ENCODE measurements at regions of chr5 and their contacts with region 1.

Region 1: DNA sequence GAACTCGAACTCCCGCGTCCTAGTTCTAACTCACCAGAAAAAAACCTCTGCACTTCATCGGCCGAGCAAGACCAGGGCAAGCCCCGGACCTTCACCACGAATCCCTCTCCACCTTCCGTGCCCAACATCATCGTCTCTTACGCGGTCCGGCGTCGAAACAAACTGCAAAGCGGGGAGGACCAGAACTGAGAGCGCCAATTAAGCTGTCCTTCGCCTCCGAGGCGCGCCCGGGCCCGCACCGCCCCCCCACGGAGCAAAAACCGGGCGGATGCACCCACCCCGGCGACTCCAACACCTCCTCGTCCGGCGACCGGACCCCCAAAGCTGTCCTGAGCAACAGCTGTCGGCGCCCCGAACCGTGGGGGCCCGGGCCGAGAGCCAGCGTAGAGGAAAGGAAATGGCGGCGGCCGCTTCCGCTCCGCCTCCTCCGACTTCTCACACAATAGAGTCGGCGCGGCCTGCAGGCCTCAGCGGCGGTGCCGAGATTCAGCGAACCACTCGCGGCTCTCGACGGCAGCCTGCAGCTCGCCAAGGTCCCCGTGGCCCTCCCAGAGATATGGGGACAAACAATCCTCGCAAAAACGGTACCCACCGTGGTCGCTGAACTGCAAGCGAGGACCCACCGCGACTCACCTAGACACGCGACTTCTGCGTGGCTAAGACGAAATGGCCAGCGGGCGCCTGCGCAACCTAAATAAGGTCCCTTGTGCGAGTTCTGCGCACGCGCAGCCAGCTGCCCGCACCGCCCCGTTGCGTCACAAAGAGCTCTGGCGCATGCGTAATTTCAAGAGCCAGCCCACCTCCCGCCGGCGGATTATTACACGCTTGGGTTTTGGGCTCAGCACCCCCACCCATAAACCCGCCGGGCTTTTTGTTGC is at the start of gene HNRNPH1:
- DNase-seq: peak; percentile 95 to 99 (median 99)
- ATAC-seq: peak; percentile 85
- H3K4me3 ChIP-seq: peak within 1 kb of the TSS; percentile 97
- H3K4me3 Mint-ChIP-seq: peak within 1 kb of the TSS; percentile 82 to 99 (median 98)
- H3K27ac ChIP-seq: peak within 1 kb of the TSS; percentile 98
- H3K27ac Mint-ChIP-seq: peak within 1 kb of the TSS; percentile 99 to 100 (median 99)
- H3K4me1 ChIP-seq: peaks cover 45 to 47% of the 10 kb centered on the region in 2 donors
- H3K4me1 Mint-ChIP-seq: peaks cover 35 to 56% (median 44%) of the 10 kb centered on the region in 7 donors
- H3K27me3 ChIP-seq: no peaks in the 10 kb centered on the region
- H3K27me3 Mint-ChIP-seq: peaks cover 0 to 8% (median 0%) of the 10 kb centered on the region in 5 donors
- total RNA-seq, gene HNRNPH1: 1,010 to 2,239 (median 1,692) TPM

Region 2: GRCh38 chr5:178204182-178204894 is 1418.9 kb before region 1 on chr5 and contains the start of gene HNRNPAB:
- CTCF ChIA-PET with region 1: no interaction called
- POLR2A ChIA-PET with region 1: interaction called, 3 read pairs
- intact Hi-C with region 1: loop called in 1 of 2 experiments (anchors 2 kb)
- DNase-seq: peak; percentile 93 to 98 (median 95)
- ATAC-seq: peak; percentile 92
- H3K4me3 ChIP-seq: peak within 1 kb of the TSS; percentile 94
- H3K4me3 Mint-ChIP-seq: peak within 1 kb of the TSS; percentile 90 to 100 (median 99)
- H3K27ac ChIP-seq: peak within 1 kb of the TSS; percentile 88
- H3K27ac Mint-ChIP-seq: peak within 1 kb of the TSS; percentile 91 to 100 (median 99)
- H3K4me1 ChIP-seq: peaks cover 11 to 25% of the 10 kb centered on the region in 2 donors
- H3K4me1 Mint-ChIP-seq: peaks cover 26 to 35% (median 33%) of the 10 kb centered on the region in 7 donors
- H3K27me3 ChIP-seq: no peaks in the 10 kb centered on the region
- H3K27me3 Mint-ChIP-seq: peaks cover 0 to 2% (median 0%) of the 10 kb centered on the region in 5 donors
- total RNA-seq, gene HNRNPAB: 68.9 to 197 (median 82.6) TPM

Region 3: DNA sequence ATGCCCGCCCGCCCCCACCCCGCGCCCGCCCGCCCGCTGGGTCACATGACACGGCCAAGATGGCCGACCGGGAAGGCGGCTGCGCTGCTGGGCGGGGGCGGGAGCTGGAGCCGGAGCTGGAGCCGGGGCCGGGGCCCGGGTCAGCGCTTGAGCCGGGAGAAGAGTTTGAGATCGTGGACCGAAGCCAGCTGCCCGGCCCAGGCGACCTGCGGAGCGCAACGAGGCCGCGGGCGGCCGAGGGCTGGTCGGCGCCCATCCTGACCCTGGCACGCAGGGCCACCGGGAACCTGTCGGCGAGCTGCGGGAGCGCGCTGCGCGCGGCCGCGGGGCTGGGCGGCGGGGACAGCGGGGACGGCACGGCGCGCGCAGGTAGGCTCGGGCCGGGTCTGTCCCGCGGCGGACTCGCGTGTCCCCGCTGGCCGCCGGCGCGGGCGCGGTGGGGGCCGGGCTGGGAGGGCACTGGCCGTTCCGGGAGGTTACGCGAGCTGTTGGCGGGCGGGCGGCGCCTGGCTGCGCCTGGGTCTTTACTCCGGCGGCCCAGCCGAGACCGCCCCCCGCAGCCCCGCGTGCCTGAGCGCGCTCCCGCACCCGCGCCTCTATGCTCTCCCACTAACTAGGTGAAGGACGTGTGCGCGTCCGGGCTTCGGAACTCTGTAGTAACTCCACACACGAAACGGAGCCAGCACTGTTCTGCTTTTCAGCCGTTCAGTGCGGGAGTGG is 72.6 kb before region 1 on chr5 and contains the start of gene RUFY1:
- CTCF ChIA-PET with region 1: no interaction called
- POLR2A ChIA-PET with region 1: interaction called, 64 read pairs
- intact Hi-C with region 1: loop called (anchors 1 kb)
- DNase-seq: peak; percentile 74 to 92 (median 87)
- ATAC-seq: peak; percentile 90
- H3K4me3 ChIP-seq: peak within 1 kb of the TSS; percentile 84
- H3K4me3 Mint-ChIP-seq: peak within 1 kb of the TSS; percentile 94 to 99 (median 96)
- H3K27ac ChIP-seq: peak within 1 kb of the TSS; percentile 87
- H3K27ac Mint-ChIP-seq: peak within 1 kb of the TSS; percentile 91 to 99 (median 98)
- H3K4me1 ChIP-seq: peaks cover 12 to 15% of the 10 kb centered on the region in 2 donors
- H3K4me1 Mint-ChIP-seq: peaks cover 10 to 49% (median 35%) of the 10 kb centered on the region in 7 donors
- H3K27me3 ChIP-seq: no peaks in the 10 kb centered on the region
- H3K27me3 Mint-ChIP-seq: peaks cover 0 to 4% (median 0%) of the 10 kb centered on the region in 5 donors
- total RNA-seq, gene RUFY1: 31.8 to 63.0 (median 52.3) TPM

Region 4: GRCh38 chr5:179678223-179679013 is 55.2 kb after region 1 on chr5:
- CTCF ChIA-PET with region 1: interaction called, 4 read pairs
- POLR2A ChIA-PET with region 1: interaction called, 31 read pairs
- intact Hi-C with region 1: loop called (anchors 1 kb)
- DNase-seq: peak; percentile 88 to 95 (median 92)
- ATAC-seq: peak; percentile 91
- H3K4me3 ChIP-seq: peak overlapping the region; percentile 99
- H3K4me3 Mint-ChIP-seq: peak overlapping the region; percentile 95 to 99 (median 98)
- H3K27ac ChIP-seq: peak overlapping the region; percentile 87
- H3K27ac Mint-ChIP-seq: peak overlapping the region; percentile 89 to 99 (median 97)
- H3K4me1 ChIP-seq: peaks cover 4 to 5% of the 10 kb centered on the region in 2 donors
- H3K4me1 Mint-ChIP-seq: peaks cover 15 to 39% (median 30%) of the 10 kb centered on the region in 7 donors
- H3K27me3 ChIP-seq: no peaks in the 10 kb centered on the region
- H3K27me3 Mint-ChIP-seq: peaks cover 0 to 5% (median 0%) of the 10 kb centered on the region in 5 donors

Region 5: DNA sequence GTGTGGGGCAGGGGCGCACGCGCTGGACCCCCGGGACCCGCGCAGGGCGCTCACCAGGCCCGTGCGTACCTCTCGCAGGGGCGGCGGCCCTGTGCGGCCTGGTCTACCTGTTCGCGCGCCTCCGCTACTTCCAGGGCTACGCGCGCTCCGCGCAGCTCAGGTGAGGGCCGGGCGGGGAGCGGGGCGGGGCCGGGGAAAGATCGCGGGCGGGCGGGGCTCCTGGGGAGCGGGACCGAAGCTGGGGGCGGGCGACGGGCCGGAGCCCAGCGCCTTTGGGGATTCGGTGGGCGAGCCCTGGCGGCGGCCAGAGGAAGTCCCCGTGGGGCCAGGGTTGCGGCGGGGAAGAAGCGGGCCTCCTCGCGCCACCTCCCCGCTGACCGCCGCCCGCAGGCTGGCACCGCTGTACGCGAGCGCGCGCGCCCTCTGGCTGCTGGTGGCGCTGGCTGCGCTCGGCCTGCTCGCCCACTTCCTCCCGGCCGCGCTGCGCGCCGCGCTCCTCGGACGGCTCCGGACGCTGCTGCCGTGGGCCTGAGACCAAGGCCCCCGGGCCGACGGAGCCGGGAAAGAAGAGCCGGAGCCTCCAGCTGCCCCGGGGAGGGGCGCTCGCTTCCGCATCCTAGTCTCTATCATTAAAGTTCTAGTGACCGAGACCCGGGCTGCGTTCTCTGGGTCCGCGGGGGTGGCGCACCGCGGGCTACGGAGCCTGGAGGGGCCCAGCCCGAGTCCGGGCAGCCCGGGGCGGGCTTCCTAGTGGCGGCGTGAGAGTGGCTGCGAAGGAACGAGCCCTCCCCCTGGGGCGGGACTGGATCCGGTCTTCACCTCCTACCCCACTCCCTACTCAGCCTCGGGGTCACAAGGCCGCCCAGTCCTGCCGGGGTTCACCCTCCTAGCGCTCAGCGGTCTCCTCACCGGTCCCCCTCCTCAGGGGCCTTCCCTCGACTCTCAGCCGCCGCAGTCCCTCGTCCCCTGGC is 172.9 kb after region 1 on chr5:
- CTCF ChIA-PET with region 1: interaction called, 3 read pairs
- POLR2A ChIA-PET with region 1: interaction called, 8 read pairs
- intact Hi-C with region 1: loop called in 1 of 2 experiments (anchors 5 kb)
- DNase-seq: peak; percentile 37 to 81 (median 65)
- ATAC-seq: peak; percentile 84
- H3K4me3 ChIP-seq: peak overlapping the region; percentile 48
- H3K4me3 Mint-ChIP-seq: peak overlapping the region; percentile 40 to 78 (median 64)
- H3K27ac ChIP-seq: peak overlapping the region; percentile 68
- H3K27ac Mint-ChIP-seq: peak overlapping the region in 4 of 9 donors; percentile 17 to 80 (median 33)
- H3K4me1 ChIP-seq: peaks cover 24 to 28% of the 10 kb centered on the region in 2 donors
- H3K4me1 Mint-ChIP-seq: peaks cover 20 to 33% (median 30%) of the 10 kb centered on the region in 7 donors
- H3K27me3 ChIP-seq: no peaks in the 10 kb centered on the region
- H3K27me3 Mint-ChIP-seq: no peaks in the 10 kb centered on the region

Region 6: GRCh38 chr5:179907570-179908324 is 284.5 kb after region 1 on chr5 and contains the start of gene TBC1D9B:
- CTCF ChIA-PET with region 1: no interaction called
- POLR2A ChIA-PET with region 1: interaction called, 3 read pairs
- intact Hi-C with region 1: loop called in 1 of 2 experiments (anchors 5 kb)
- DNase-seq: peak; percentile 68 to 81 (median 73)
- ATAC-seq: peak; percentile 95
- H3K4me3 ChIP-seq: peak within 1 kb of the TSS; percentile 64
- H3K4me3 Mint-ChIP-seq: peak within 1 kb of the TSS; percentile 78 to 92 (median 90)
- H3K27ac ChIP-seq: peak within 1 kb of the TSS; percentile 56
- H3K27ac Mint-ChIP-seq: peak within 1 kb of the TSS; percentile 42 to 91 (median 85)
- H3K4me1 ChIP-seq: peaks cover 13 to 14% of the 10 kb centered on the region in 2 donors
- H3K4me1 Mint-ChIP-seq: peaks cover 7 to 40% (median 23%) of the 10 kb centered on the region in 7 donors
- H3K27me3 ChIP-seq: no peaks in the 10 kb centered on the region
- H3K27me3 Mint-ChIP-seq: no peaks in the 10 kb centered on the region
- total RNA-seq, gene TBC1D9B: 71.3 to 117 (median 86.9) TPM

Region 7: GRCh38 chr5:179967489-179967888 is 344.2 kb after region 1 on chr5:
- CTCF ChIA-PET with region 1: no interaction called
- POLR2A ChIA-PET with region 1: no interaction called
- intact Hi-C with region 1: no loop called
- DNase-seq: no peak
- ATAC-seq: no peak
- H3K4me3 ChIP-seq: no peak overlapping the region
- H3K4me3 Mint-ChIP-seq: no peak overlapping the region
- H3K27ac ChIP-seq: no peak overlapping the region
- H3K27ac Mint-ChIP-seq: no peak overlapping the region
- H3K4me1 ChIP-seq: no peaks in the 10 kb centered on the region
- H3K4me1 Mint-ChIP-seq: peaks cover 7 to 14% (median 11%) of the 10 kb centered on the region in 7 donors
- H3K27me3 ChIP-seq: no peaks in the 10 kb centered on the region
- H3K27me3 Mint-ChIP-seq: no peaks in the 10 kb centered on the region

Region 8: GRCh38 chr5:180810210-180810958 is 1187.1 kb after region 1 on chr5:
- CTCF ChIA-PET with region 1: no interaction called
- POLR2A ChIA-PET with region 1: no interaction called
- intact Hi-C with region 1: loop called in 1 of 2 experiments (anchors 2 kb)
- DNase-seq: peak; percentile 94 to 99 (median 98)
- ATAC-seq: peak; percentile 86
- H3K4me3 ChIP-seq: peak overlapping the region; percentile 88
- H3K4me3 Mint-ChIP-seq: peak overlapping the region; percentile 83 to 99 (median 92)
- H3K27ac ChIP-seq: peak overlapping the region; percentile 96
- H3K27ac Mint-ChIP-seq: peak overlapping the region; percentile 91 to 100 (median 98)
- H3K4me1 ChIP-seq: peaks cover 38 to 47% of the 10 kb centered on the region in 2 donors
- H3K4me1 Mint-ChIP-seq: peaks cover 56 to 84% (median 75%) of the 10 kb centered on the region in 7 donors
- H3K27me3 ChIP-seq: no peaks in the 10 kb centered on the region
- H3K27me3 Mint-ChIP-seq: peaks cover 0 to 4% (median 0%) of the 10 kb centered on the region in 5 donors

Measured in naive thymus-derived CD4-positive, alpha-beta T cell (primary cell).